ENCODE measurements at regions of chr5 and their contacts with region 1.

Region 1: DNA sequence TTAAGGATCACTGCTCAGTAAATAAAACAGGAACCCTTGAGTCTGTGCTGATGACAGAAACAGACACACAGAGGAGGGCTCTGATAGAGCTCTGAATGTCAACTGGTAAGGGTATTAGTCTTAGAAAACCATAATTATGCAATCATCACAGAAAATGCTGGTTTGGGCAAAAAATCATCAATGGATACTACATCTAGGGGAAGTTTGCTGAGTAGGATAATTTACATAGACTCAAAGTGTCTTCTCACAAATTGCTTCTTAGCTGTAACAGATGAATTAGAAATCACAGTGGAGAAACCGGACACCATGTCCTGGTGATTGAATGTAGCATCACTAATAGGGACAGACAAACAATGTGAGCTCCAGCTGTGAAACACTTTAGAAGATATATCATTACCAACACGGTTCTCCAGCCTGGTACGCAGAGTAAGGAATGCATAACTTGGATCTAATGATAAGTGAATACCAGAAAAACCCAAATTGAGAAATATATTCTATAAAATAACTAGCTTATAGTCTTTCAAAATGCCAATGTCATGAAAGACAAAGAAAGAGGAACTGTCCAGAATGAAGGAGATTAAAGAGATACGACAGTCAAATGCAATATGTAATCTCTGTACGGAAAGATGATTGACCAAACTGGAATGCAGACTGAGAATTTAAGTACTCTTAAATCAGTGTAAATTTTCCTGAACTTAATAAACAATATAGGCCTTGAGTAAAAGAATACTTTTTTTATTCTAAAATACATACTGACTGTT is 17.3 kb downstream of the CHD1 start:
- DNase-seq: no peak
- ATAC-seq: no peak
- H3K4me3 ChIP-seq: no peak overlapping the region
- H3K4me3 Mint-ChIP-seq: no peak overlapping the region
- H3K27ac ChIP-seq: no peak overlapping the region
- H3K27ac Mint-ChIP-seq: no peak overlapping the region
- H3K4me1 ChIP-seq: peaks cover 36% of the 10 kb centered on the region
- H3K4me1 Mint-ChIP-seq: peaks cover 75% of the 10 kb centered on the region
- H3K27me3 ChIP-seq: no peaks in the 10 kb centered on the region
- H3K27me3 Mint-ChIP-seq: no peaks in the 10 kb centered on the region
- CTCF ChIP-seq: no peak

Region 2: GRCh38 chr5:98923966-98924365 is 12.5 kb after region 1 on chr5:
- CTCF ChIA-PET with region 1: interaction called, 5 read pairs
- POLR2A ChIA-PET with region 1: interaction called, 7 read pairs
- intact Hi-C with region 1: loop called (anchors 1 to 2 kb)
- DNase-seq: peak in 1 of 9 experiments; percentile 33
- ATAC-seq: no peak
- H3K4me3 ChIP-seq: no peak overlapping the region
- H3K4me3 Mint-ChIP-seq: no peak overlapping the region
- H3K27ac ChIP-seq: no peak overlapping the region
- H3K27ac Mint-ChIP-seq: no peak overlapping the region
- H3K4me1 ChIP-seq: peaks cover 64% of the 10 kb centered on the region
- H3K4me1 Mint-ChIP-seq: peaks cover 69% of the 10 kb centered on the region
- H3K27me3 ChIP-seq: no peaks in the 10 kb centered on the region
- H3K27me3 Mint-ChIP-seq: no peaks in the 10 kb centered on the region
- CTCF ChIP-seq: no peak

Region 3: DNA sequence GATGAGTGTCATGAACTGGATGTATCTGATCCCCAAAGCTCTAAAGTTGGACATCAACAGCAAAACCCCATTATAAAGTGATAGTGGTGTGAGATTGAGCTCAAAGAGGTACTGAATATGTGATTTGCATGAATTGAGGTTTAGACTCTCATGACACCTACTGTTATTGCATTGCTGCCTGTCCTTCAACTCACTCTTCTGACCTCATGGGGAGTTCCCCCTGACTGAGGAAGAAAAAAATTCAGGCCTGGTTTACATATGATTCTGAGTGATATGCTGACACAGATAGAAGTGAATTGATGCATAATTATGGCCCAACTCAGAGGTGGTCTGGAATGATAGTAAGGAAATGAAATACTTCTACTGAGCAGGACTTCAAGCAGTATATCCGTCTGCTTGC is 93.5 kb after region 1 on chr5:
- CTCF ChIA-PET with region 1: no interaction called
- POLR2A ChIA-PET with region 1: no interaction called
- intact Hi-C with region 1: no loop called
- DNase-seq: peak in 4 of 9 experiments; percentile 8 to 72 (median 48)
- ATAC-seq: peak; percentile 99
- H3K4me3 ChIP-seq: no peak overlapping the region
- H3K4me3 Mint-ChIP-seq: no peak overlapping the region
- H3K27ac ChIP-seq: no peak overlapping the region
- H3K27ac Mint-ChIP-seq: peak overlapping the region; percentile 56
- H3K4me1 ChIP-seq: no peaks in the 10 kb centered on the region
- H3K4me1 Mint-ChIP-seq: peaks cover 19% of the 10 kb centered on the region
- H3K27me3 ChIP-seq: no peaks in the 10 kb centered on the region
- H3K27me3 Mint-ChIP-seq: no peaks in the 10 kb centered on the region
- CTCF ChIP-seq: no peak

Region 4: GRCh38 chr5:99156688-99157087 is 245.2 kb after region 1 on chr5:
- CTCF ChIA-PET with region 1: no interaction called
- POLR2A ChIA-PET with region 1: no interaction called
- intact Hi-C with region 1: no loop called
- DNase-seq: no peak
- ATAC-seq: no peak
- H3K4me3 ChIP-seq: no peak overlapping the region
- H3K4me3 Mint-ChIP-seq: no peak overlapping the region
- H3K27ac ChIP-seq: no peak overlapping the region
- H3K27ac Mint-ChIP-seq: no peak overlapping the region
- H3K4me1 ChIP-seq: no peaks in the 10 kb centered on the region
- H3K4me1 Mint-ChIP-seq: no peaks in the 10 kb centered on the region
- H3K27me3 ChIP-seq: no peaks in the 10 kb centered on the region
- H3K27me3 Mint-ChIP-seq: no peaks in the 10 kb centered on the region
- CTCF ChIP-seq: no peak

Region 5: GRCh38 chr5:99587983-99588382 is 676.5 kb after region 1 on chr5:
- CTCF ChIA-PET with region 1: no interaction called
- POLR2A ChIA-PET with region 1: no interaction called
- intact Hi-C with region 1: no loop called
- DNase-seq: no peak
- ATAC-seq: no peak
- H3K4me3 ChIP-seq: no peak overlapping the region
- H3K4me3 Mint-ChIP-seq: no peak overlapping the region
- H3K27ac ChIP-seq: no peak overlapping the region
- H3K27ac Mint-ChIP-seq: no peak overlapping the region
- H3K4me1 ChIP-seq: no peaks in the 10 kb centered on the region
- H3K4me1 Mint-ChIP-seq: no peaks in the 10 kb centered on the region
- H3K27me3 ChIP-seq: no peaks in the 10 kb centered on the region
- H3K27me3 Mint-ChIP-seq: no peaks in the 10 kb centered on the region
- CTCF ChIP-seq: no peak